ENCODE measurements at regions of chr9 and their contacts with region 1.

Region 1: DNA sequence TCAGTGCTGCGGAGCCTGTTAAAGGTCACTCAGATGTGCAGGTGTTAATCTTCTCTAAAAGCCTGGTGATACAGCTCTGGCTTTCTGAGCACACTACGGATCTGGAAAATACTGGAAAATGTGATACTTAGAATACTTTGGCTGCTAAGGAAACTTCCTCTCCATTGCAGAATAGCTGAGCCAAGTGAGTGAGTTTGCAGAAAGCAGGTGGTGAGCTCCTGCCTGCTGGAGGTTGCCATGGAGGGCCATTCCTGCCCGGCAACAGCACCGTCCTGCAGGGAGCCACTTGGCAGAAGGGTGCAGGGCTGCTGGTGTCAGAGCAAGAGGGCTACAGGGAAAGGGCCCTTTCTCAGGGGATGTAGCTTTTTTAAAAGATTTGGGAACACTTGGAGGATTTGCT is 40.7 kb downstream of the SECISBP2 start:
- DNase-seq: no peak
- H3K4me3 Mint-ChIP-seq: no peak overlapping the region
- H3K27ac Mint-ChIP-seq: no peak overlapping the region
- H3K4me1 Mint-ChIP-seq: peaks cover 12% of the 10 kb centered on the region
- H3K27me3 Mint-ChIP-seq: no peaks in the 10 kb centered on the region

Region 2: GRCh38 chr9:89347651-89348050 is 11.3 kb before region 1 on chr9:
- CTCF ChIA-PET with region 1: interaction called, 11 read pairs
- POLR2A ChIA-PET with region 1: no interaction called
- DNase-seq: no peak
- H3K4me3 Mint-ChIP-seq: no peak overlapping the region
- H3K27ac Mint-ChIP-seq: no peak overlapping the region
- H3K4me1 Mint-ChIP-seq: peaks cover 21% of the 10 kb centered on the region
- H3K27me3 Mint-ChIP-seq: no peaks in the 10 kb centered on the region

Region 3: GRCh38 chr9:89386797-89387196 is 27.8 kb after region 1 on chr9:
- CTCF ChIA-PET with region 1: no interaction called
- POLR2A ChIA-PET with region 1: no interaction called
- DNase-seq: no peak
- H3K4me3 Mint-ChIP-seq: no peak overlapping the region
- H3K27ac Mint-ChIP-seq: no peak overlapping the region
- H3K4me1 Mint-ChIP-seq: peaks cover 44% of the 10 kb centered on the region
- H3K27me3 Mint-ChIP-seq: no peaks in the 10 kb centered on the region

Region 4: DNA sequence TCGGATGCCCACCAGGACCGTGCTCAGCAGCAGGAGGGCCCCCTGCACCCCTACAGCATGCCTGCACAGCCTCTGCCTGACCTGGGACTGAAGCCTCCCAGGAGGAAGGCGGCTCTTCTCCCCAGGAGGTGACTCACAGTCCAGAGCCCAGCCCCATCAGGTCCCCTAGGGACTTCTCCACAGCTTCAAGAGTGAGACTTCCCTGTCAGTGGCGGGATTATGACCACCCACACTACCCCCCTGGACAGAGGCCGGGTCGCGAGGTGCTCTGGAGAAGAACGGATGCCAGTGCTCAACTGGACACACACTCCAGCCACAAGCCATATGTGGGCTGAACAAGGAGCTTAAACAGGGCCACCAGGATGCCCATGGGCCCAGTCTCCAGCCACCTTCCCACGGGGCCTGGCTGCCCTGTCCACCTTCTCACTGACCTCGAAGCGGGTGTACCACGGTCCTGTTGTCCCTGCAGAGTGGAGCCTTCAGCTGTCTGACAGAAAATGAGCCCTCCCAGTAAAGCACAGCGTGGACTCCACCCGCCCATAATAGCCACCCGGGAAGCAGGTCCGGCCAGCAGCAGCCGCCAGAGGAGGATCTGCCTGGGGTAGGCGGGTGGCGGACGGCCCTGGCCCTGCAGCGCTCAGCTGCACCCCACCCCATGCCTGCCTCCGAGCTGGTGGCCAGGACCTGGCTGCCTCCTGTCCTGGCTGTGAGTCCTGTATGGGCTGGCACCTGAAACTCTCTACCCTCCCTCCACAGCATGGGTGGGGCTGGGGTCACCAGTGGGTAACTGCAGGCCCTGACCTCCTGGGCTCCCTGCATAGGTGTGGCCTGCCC is 84.2 kb after region 1 on chr9:
- CTCF ChIA-PET with region 1: no interaction called
- POLR2A ChIA-PET with region 1: no interaction called
- DNase-seq: no peak
- H3K4me3 Mint-ChIP-seq: no peak overlapping the region
- H3K27ac Mint-ChIP-seq: peak overlapping the region; percentile 86
- H3K4me1 Mint-ChIP-seq: peaks cover 91% of the 10 kb centered on the region
- H3K27me3 Mint-ChIP-seq: no peaks in the 10 kb centered on the region